H1 (cell line): ENCODE measurements at regions of chr7 and their contacts with region 1.

Region 1: DNA sequence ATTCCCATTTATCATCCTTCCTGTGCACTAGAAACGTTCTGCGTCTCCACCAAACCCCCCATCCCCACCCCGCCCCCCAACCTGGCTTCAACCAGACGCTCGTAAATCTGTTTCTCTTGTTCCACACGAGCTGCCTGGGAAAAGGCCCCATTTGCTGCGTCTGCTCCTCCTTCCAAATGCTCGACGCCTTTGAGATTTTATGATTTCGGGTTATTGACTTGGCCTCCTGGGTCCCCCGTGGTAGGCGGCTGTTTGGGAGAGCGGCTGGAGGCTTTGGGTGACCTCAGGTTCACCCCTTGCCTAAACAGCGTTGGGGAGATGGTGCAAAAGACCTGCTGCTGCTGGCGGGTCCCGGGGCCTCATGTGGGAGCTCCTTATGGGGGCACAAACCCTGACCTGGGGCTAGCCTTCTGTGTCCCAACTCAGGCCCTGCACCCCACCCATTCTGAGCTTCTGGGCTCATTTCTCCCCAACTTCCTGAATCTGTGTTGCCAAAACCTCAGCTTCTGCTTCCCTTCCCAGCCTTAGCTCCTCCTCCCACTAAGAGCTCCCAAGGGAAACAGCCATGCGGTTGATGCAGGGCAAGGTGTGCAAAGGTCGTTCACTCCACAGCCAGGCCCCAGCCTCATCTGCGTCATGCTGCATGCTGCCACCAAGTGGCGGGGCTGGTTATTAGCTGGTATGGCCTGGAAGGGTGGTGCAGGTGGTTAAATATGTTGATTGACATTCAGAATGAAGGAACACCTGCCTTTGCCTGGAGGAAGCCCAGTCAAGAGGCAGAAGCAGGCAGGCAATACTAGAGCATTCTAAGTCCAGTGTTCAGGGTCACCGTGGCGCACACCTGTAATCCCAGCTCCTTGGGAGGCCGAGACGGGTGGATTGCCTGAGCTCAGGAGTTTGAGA is 49.1 kb upstream of the ELN start:
- DNase-seq: peak; percentile 29 to 81
- H3K4me3 ChIP-seq: no peak overlapping the region
- H3K27ac ChIP-seq: no peak overlapping the region
- H3K4me1 ChIP-seq: no peaks in the 10 kb centered on the region; a peak in 1 of 7 replicates
- H3K27me3 ChIP-seq: no peaks in the 10 kb centered on the region
- CTCF ChIP-seq: peak; percentile 79 to 92 (median 89)
- EP300 ChIP-seq: no peak
- POLR2A ChIP-seq: no peak
- RAD21 ChIP-seq: peak; percentile 79 to 85

Region 2: GRCh38 chr7:73865738-73866445 is 113.0 kb before region 1 on chr7:
- CTCF ChIA-PET with region 1: interaction called, 17 read pairs
- POLR2A ChIA-PET with region 1: no interaction called
- DNase-seq: peak in 1 of 2 experiments; percentile 58
- H3K4me3 ChIP-seq: no peak overlapping the region
- H3K27ac ChIP-seq: no peak overlapping the region
- H3K4me1 ChIP-seq: peaks cover 3 to 15% (median 12%) of the 10 kb centered on the region in 4 experiments
- H3K27me3 ChIP-seq: no peaks in the 10 kb centered on the region
- CTCF ChIP-seq: peak; percentile 58 to 82 (median 68)
- EP300 ChIP-seq: no peak
- POLR2A ChIP-seq: no peak
- RAD21 ChIP-seq: peak; percentile 94 to 95

Region 3: GRCh38 chr7:73879977-73880681 is 98.8 kb before region 1 on chr7:
- CTCF ChIA-PET with region 1: interaction called, 14 read pairs
- POLR2A ChIA-PET with region 1: no interaction called
- DNase-seq: no peak
- H3K4me3 ChIP-seq: no peak overlapping the region
- H3K27ac ChIP-seq: no peak overlapping the region
- H3K4me1 ChIP-seq: no peaks in the 10 kb centered on the region
- H3K27me3 ChIP-seq: no peaks in the 10 kb centered on the region
- CTCF ChIP-seq: no peak
- EP300 ChIP-seq: no peak
- POLR2A ChIP-seq: no peak
- RAD21 ChIP-seq: no peak

Region 4: GRCh38 chr7:73991522-73992100 is 12.7 kb after region 1 on chr7:
- CTCF ChIA-PET with region 1: interaction called, 12 read pairs
- POLR2A ChIA-PET with region 1: no interaction called
- DNase-seq: no peak
- H3K4me3 ChIP-seq: no peak overlapping the region
- H3K27ac ChIP-seq: no peak overlapping the region
- H3K4me1 ChIP-seq: no peaks in the 10 kb centered on the region
- H3K27me3 ChIP-seq: no peaks in the 10 kb centered on the region
- CTCF ChIP-seq: no peak
- EP300 ChIP-seq: no peak
- POLR2A ChIP-seq: no peak
- RAD21 ChIP-seq: no peak

Region 5: DNA sequence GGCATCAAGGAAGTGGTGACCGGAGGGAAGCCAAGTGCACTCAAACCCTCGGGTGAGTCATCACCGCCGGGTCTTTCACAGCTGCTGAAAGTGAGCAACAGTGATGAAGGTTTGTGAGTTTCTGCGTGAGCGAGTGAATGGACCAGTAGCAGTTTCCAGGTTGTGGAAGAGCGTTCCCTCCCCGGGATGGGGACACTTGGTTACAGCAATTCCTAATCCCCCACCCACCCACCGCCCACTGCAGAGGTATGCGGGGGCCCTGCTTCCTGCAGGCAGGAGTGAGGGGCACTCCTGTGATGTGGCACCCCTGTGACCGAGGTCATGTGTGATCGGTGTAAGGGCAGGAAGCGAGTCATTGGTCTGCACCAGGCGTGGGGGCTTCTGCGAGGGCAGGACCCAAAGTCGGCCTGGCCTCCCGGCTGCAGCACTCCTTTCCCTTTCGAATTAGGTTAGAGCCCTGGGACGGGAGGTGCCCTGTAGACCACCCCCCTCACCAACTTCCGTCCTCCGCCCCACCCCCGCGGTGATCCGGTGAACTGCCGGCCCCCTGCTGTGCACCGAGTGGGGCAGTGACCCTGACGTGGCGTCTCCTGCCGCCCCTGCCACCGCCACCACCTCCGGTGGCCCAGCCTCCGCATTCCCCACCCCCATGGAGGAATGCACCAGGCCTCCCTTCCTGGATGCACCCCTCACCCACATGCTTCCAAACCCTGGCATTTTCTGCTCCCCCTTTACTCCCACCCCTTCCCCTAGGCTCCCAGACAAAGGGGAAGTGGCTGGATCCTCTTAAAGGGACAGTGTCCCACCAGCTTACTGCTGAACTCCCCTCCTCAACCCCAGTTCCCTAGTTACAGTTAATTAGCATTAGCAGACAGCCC is 115.6 kb after region 1 on chr7:
- CTCF ChIA-PET with region 1: no interaction called
- POLR2A ChIA-PET with region 1: no interaction called
- DNase-seq: peak; percentile 79 to 87
- H3K4me3 ChIP-seq: peak overlapping the region; percentile 1 to 51 (median 20); a peak in 6 of 8 replicates
- H3K27ac ChIP-seq: peak overlapping the region; percentile 52; the same call in 1 of the 2 replicates
- H3K4me1 ChIP-seq: peaks cover 8 to 31% (median 26%) of the 10 kb centered on the region in 4 experiments
- H3K27me3 ChIP-seq: no peaks in the 10 kb centered on the region
- CTCF ChIP-seq: no peak
- EP300 ChIP-seq: no peak
- POLR2A ChIP-seq: 0 out of 3 replicates have a peak, but pooled peaks of 1 of the 2 experiments have one; percentile 36
- RAD21 ChIP-seq: peak in 1 of 2 experiments; percentile 14; a peak in 1 of 4 replicates